Gastrocnemius medialis (tissue), 4 donors: ENCODE measurements at regions of chr14 and their contacts with region 1.

Region 1: DNA sequence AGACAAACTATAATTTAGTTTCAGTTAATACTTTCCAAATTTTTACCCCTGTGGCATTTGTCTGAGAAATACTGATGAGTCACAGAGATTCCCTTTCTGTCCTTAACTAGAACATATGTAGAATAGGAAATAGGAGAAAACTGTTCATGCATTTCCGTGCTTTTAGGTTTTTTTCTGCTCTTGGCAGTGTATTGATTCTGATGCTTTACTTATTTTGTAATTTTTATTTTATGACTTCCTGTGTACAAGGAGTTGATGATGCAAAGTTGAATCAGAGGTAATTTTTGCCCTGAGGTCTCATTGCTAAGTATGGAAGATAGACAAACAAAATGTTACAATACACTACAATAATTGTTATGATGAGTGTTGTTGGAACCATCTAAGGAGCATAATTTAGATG is 23.1 kb downstream of the MNAT1 start:
- DNase-seq: no peak
- ATAC-seq: no peak
- H3K4me3 ChIP-seq: no peak overlapping the region
- H3K27ac ChIP-seq: peak overlapping the region; percentile 64 to 80 (median 72)
- H3K4me1 ChIP-seq: peaks cover 61 to 71% of the 10 kb centered on the region in 2 donors
- H3K27me3 ChIP-seq: no peaks in the 10 kb centered on the region
- CTCF ChIP-seq: no peak
- POLR2A ChIP-seq: no peak

Region 2: DNA sequence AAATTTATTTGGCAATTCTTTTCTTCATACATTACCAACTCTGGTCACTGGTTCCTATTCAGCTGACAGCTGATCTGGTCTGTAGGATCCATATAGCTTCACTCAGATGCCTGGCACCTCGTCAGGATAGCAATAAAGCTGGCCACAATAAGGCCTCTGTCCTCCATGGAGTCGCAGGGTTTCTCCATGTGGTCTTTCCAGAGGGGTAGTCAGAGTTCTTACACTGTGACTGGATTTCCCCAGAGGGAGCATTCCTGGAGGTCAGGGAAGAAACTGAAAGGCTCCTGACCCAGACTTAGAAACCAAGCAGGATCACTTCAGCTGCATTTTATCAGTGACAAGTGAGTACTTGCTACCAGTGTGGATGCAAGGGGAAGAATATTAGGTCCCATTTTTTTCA is 73.4 kb before region 1 on chr14:
- in situ Hi-C with region 1: no loop called
- intact Hi-C with region 1: no loop called
- DNase-seq: no peak
- ATAC-seq: no peak
- H3K4me3 ChIP-seq: no peak overlapping the region
- H3K27ac ChIP-seq: no peak overlapping the region
- H3K4me1 ChIP-seq: no peaks in the 10 kb centered on the region
- H3K27me3 ChIP-seq: no peaks in the 10 kb centered on the region
- CTCF ChIP-seq: no peak
- POLR2A ChIP-seq: no peak

Region 3: DNA sequence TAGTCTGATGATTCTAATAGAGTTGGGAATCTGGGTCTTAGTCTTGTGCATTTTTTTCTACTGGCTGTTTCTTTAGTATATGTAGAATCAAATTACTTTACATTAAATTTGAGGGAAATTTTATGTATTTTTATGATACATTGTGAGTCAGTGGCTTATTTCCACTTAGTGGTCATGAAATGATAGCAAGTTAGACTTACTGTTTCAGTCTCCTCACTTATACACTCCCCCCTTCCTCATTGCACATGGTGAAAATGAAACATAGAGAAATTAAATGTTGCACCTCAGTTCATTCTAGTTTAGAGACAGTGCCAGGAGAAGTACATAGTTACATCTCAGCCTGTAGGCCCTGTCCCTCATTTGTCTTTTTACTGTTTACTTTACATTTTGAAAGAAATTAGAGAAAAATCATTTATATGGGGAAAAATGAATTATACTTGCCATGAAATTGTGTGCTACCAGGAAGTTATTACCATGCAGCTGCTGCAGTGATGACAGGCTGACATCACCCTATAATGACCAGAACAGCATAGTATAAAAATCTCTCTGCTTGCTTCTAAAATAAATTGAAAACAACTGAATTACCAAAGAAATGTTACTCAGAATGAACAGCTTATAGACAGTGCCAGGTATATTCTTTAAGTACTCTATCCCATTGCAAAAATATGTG is 110.0 kb after region 1 on chr14:
- in situ Hi-C with region 1: no loop called
- intact Hi-C with region 1: loop called (anchors 5 kb)
- DNase-seq: no peak
- ATAC-seq: no peak
- H3K4me3 ChIP-seq: no peak overlapping the region
- H3K27ac ChIP-seq: peak overlapping the region; percentile 76 to 87 (median 84)
- H3K4me1 ChIP-seq: peaks cover 54 to 67% of the 10 kb centered on the region in 2 donors
- H3K27me3 ChIP-seq: no peaks in the 10 kb centered on the region
- CTCF ChIP-seq: no peak
- POLR2A ChIP-seq: no peak